ENCODE measurements at regions of chr19 and their contacts with region 1.

Region 1: GRCh38 chr19:48993175-48994034 is at the starts of genes GYS1 and RUVBL2:
- DNase-seq: peak; percentile 99 to 100
- H3K4me3 ChIP-seq: peak within 1 kb of the TSS; percentile 58 to 81
- H3K27ac ChIP-seq: peak within 1 kb of the TSS; percentile 94
- H3K4me1 ChIP-seq: peaks cover 21 to 26% of the 10 kb centered on the region in 2 donors
- H3K27me3 ChIP-seq: no peaks in the 10 kb centered on the region
- CTCF ChIP-seq: peak; percentile 98 to 100 (median 99)
- total RNA-seq, gene GYS1: 21.8 TPM
- total RNA-seq, gene RUVBL2: 106 TPM

Region 2: GRCh38 chr19:48954595-48955310 is 38.7 kb before region 1 on chr19 and contains the start of gene BAX:
- intact Hi-C with region 1: no loop called
- DNase-seq: peak; percentile 92 to 99
- H3K4me3 ChIP-seq: peak within 1 kb of the TSS; percentile 88 to 95
- H3K27ac ChIP-seq: peak within 1 kb of the TSS; percentile 86 to 94
- H3K4me1 ChIP-seq: peaks cover 5 to 13% of the 10 kb centered on the region in 2 donors
- H3K27me3 ChIP-seq: no peaks in the 10 kb centered on the region
- CTCF ChIP-seq: no peak
- total RNA-seq, gene BAX: 182 TPM

Region 3: GRCh38 chr19:48975947-48976847 is 17.2 kb before region 1 on chr19:
- intact Hi-C with region 1: loop called (anchors 1 kb)
- DNase-seq: no peak
- H3K4me3 ChIP-seq: no peak overlapping the region
- H3K27ac ChIP-seq: peak overlapping the region; percentile 14 to 93
- H3K4me1 ChIP-seq: peaks cover 0 to 15% of the 10 kb centered on the region in 2 donors
- H3K27me3 ChIP-seq: no peaks in the 10 kb centered on the region
- CTCF ChIP-seq: no peak

Region 4: DNA sequence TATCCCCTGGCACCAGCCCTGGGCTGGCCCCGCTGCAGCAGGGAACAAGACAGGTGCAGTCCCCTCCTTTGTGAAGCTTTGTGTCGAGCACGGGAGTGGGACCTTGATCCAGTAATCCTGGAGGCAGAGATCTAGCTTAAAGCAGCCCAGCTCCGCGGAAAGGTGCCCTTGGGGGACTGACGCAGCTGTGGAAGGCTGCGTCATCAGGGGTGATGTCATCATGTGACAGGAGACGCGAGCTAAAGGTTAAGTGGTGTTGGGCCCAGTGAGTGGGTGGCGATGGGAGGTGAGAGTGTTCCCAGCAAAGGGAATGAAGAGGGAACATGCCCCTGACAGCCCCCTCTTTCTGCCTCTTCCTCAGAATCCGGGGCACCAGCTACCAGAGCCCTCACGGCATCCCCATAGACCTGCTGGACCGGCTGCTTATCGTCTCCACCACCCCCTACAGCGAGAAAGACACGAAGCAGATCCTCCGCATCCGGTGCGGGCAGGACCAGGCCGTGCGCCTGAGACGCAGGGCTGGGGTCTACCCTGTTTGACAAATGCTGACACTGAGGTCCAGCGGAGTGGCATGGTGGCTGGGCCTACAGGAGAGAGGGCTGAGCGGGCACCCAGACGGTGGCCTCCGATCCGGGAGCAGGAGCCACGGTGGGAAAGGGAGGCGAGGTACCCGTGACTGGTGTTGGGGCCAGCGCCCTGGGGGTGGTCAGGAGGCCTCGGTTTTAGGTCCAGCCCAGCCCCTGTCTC is 20.9 kb after region 1 on chr19:
- intact Hi-C with region 1: no loop called
- DNase-seq: no peak
- H3K4me3 ChIP-seq: no peak overlapping the region
- H3K27ac ChIP-seq: no peak overlapping the region
- H3K4me1 ChIP-seq: peaks cover 4 to 16% of the 10 kb centered on the region in 2 donors
- H3K27me3 ChIP-seq: peaks cover 5% of the 10 kb centered on the region
- CTCF ChIP-seq: no peak

Region 5: GRCh38 chr19:49085020-49085867 is 91.8 kb after region 1 on chr19 and contains the start of gene SNRNP70:
- intact Hi-C with region 1: loop called (anchors 1 kb)
- DNase-seq: peak; percentile 97 to 100
- H3K4me3 ChIP-seq: peak within 1 kb of the TSS; percentile 78 to 84
- H3K27ac ChIP-seq: peak within 1 kb of the TSS; percentile 81 to 83
- H3K4me1 ChIP-seq: peaks cover 9 to 16% of the 10 kb centered on the region in 2 donors
- H3K27me3 ChIP-seq: no peaks in the 10 kb centered on the region
- CTCF ChIP-seq: no peak
- total RNA-seq, gene SNRNP70: 185 TPM

Region 6: GRCh38 chr19:49421039-49421877 is 427.9 kb after region 1 on chr19:
- intact Hi-C with region 1: no loop called
- DNase-seq: peak in 1 of 2 donors; percentile 68
- H3K4me3 ChIP-seq: no peak overlapping the region
- H3K27ac ChIP-seq: no peak overlapping the region
- H3K4me1 ChIP-seq: peaks cover 6 to 17% of the 10 kb centered on the region in 2 donors
- H3K27me3 ChIP-seq: peaks cover 21% of the 10 kb centered on the region
- CTCF ChIP-seq: no peak